ENCODE measurements at regions of chr16 and their contacts with region 1.

Region 1: GRCh38 chr16:86563489-86564345 is 2.9 kb upstream of the FOXC2 start:
- DNase-seq: peak; percentile 98
- H3K4me3 ChIP-seq: peak overlapping the region in 1 of 2 donors; percentile 8
- H3K27ac ChIP-seq: peak overlapping the region; percentile 23 to 60
- H3K4me1 ChIP-seq: peaks cover 4% of the 10 kb centered on the region
- H3K27me3 ChIP-seq: no peaks in the 10 kb centered on the region
- CTCF ChIP-seq: peak; percentile 99 to 100 (median 99)
- POLR2A ChIP-seq: no peak

Region 2: GRCh38 chr16:87059994-87060986 is 496.6 kb after region 1 on chr16:
- intact Hi-C with region 1: loop called (anchors 5 kb)
- DNase-seq: no peak
- H3K4me3 ChIP-seq: no peak overlapping the region
- H3K27ac ChIP-seq: no peak overlapping the region
- H3K4me1 ChIP-seq: no peaks in the 10 kb centered on the region
- H3K27me3 ChIP-seq: no peaks in the 10 kb centered on the region
- CTCF ChIP-seq: no peak
- POLR2A ChIP-seq: no peak

Region 3: DNA sequence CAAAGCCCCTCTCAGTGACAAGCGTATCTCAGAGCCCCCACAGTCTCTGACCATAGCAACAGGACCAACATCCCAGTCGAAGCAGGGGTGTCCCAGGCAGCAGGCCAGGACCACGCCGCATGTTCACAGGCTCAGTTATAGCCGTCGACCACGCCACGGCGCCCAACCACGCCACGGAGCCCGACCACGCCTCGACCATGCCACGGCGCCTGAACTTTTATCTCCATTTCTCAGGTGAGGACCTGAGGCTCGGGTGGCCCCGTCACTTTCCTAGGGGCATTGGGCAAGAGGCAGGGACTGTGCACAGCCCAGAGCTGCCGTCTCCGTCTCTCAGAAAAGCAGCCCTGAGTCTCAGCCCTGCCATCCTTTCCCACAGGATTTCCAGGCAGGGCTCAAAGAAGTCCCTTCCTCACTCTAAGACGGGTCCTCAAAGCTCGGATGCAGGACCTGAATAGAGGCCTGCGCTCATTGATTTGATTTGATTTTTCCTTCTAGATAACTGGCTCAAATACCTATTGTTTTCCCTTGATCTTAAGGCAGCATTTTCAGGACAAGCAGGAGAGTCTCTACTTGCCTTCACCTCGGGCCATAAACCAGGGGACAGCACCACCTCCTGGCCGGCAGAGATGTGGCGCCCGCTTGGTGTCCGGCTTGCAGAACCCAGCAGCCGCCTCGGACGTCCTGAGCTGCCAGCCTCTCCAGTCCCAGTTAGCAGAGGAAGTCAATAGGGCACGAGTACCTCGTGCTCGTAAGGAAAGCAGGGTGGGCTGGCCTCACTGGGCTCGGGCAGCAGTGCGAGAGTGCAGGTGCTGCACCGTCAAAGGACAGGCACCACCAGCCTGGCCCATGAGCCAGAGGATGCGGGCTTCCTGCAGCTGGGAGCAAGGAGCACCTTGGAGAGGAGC is 714.7 kb after region 1 on chr16:
- intact Hi-C with region 1: loop called (anchors 5 kb)
- DNase-seq: peak; percentile 87
- H3K4me3 ChIP-seq: no peak overlapping the region
- H3K27ac ChIP-seq: no peak overlapping the region
- H3K4me1 ChIP-seq: no peaks in the 10 kb centered on the region
- H3K27me3 ChIP-seq: no peaks in the 10 kb centered on the region
- CTCF ChIP-seq: peak; percentile 80 to 92 (median 91)
- POLR2A ChIP-seq: no peak